Activated B cell treated with CpG ODN at 0.5 μM for 24 hours (primary cell): ENCODE measurements at regions of chr16 and their contacts with region 1.

Region 1: DNA sequence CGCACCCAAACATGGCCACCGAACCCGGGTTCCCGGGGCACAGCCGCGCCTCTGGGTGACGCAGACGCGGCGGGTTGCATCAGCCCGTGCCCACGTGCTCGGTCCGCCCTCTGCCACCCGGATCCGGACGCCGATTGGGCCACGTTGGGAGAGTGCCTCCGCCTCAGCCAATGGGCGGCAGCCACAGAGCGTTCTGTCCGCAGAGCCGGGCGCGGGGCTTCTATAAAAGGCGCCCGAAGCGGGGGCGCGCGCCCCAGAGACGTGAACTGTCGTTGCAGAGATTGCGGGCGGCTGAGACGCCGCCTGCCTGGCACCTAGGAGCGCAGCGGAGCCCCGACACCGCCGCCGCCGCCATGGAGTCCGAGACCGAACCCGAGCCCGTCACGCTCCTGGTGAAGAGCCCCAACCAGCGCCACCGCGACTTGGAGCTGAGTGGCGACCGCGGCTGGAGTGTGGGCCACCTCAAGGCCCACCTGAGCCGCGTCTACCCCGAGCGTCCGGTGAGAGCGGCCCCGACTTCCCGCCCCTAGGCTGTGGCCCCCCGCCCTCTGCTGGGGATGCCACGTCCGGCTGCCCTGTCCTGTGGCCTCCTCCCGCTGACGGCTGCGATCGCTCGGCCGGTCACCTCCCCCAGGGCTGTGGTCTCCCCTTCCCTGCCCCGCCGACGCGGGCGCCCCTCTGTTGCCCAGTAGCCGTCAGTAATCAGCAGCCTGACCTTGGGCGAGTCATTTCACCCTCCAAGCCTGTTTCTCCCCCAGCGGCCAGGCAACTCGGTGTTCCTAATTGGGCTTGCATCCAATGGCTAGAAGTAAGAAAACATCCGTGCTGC is at the start of gene HERPUD1:
- DNase-seq: peak; percentile 98
- ATAC-seq: peak; percentile 79
- H3K4me3 Mint-ChIP-seq: peak within 1 kb of the TSS; percentile 97
- H3K27ac Mint-ChIP-seq: peak within 1 kb of the TSS; percentile 95
- H3K4me1 Mint-ChIP-seq: peaks cover 61% of the 10 kb centered on the region
- H3K27me3 Mint-ChIP-seq: no peaks in the 10 kb centered on the region
- CTCF ChIP-seq: no peak
- total RNA-seq, gene HERPUD1: 766 and 820 TPM in 2 replicates

Region 2: GRCh38 chr16:56729735-56730662 is 202.1 kb before region 1 on chr16 and contains the start of gene NUP93:
- CTCF ChIA-PET with region 1: no interaction called
- POLR2A ChIA-PET with region 1: interaction called, 4 read pairs
- intact Hi-C with region 1: loop called (anchors 2 kb)
- DNase-seq: peak; percentile 79
- ATAC-seq: peak; percentile 89
- H3K4me3 Mint-ChIP-seq: peak within 1 kb of the TSS; percentile 90
- H3K27ac Mint-ChIP-seq: peak within 1 kb of the TSS; percentile 84
- H3K4me1 Mint-ChIP-seq: peaks cover 20% of the 10 kb centered on the region
- H3K27me3 Mint-ChIP-seq: no peaks in the 10 kb centered on the region
- CTCF ChIP-seq: no peak
- total RNA-seq, gene NUP93: 104 and 111 TPM in 2 replicates

Region 3: DNA sequence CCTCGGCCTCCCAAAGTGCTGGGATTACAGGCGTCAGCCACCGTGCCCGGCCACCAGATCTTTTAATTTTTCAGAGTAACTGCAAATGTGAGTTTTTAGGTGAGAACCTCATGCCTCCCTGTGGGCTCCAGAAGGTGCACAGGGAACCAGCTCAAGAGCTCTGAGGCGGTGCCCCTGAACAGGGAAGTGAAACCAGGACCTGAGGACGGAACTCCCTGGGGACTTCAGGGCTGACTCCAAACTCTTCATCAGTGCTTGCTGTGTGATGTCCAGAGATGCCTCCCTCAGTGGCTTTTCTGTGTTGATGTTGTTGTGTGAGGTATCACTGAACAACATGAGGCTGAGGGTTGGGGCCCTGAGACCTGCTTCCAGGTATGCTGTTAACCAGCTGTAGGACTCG is 43.3 kb before region 1 on chr16:
- CTCF ChIA-PET with region 1: no interaction called
- POLR2A ChIA-PET with region 1: interaction called, 25 read pairs
- intact Hi-C with region 1: loop called (anchors 1 kb)
- DNase-seq: peak; percentile 55
- ATAC-seq: peak; percentile 91
- H3K4me3 Mint-ChIP-seq: peak overlapping the region; percentile 24
- H3K27ac Mint-ChIP-seq: peak overlapping the region; percentile 68
- H3K4me1 Mint-ChIP-seq: peaks cover 16% of the 10 kb centered on the region
- H3K27me3 Mint-ChIP-seq: no peaks in the 10 kb centered on the region
- CTCF ChIP-seq: no peak

Region 4: GRCh38 chr16:56919099-56919800 is 12.9 kb before region 1 on chr16:
- CTCF ChIA-PET with region 1: interaction called, 13 read pairs
- POLR2A ChIA-PET with region 1: interaction called, 795 read pairs
- intact Hi-C with region 1: loop called (anchors 1 kb)
- DNase-seq: no peak
- ATAC-seq: peak; percentile 16
- H3K4me3 Mint-ChIP-seq: peak overlapping the region; percentile 61
- H3K27ac Mint-ChIP-seq: peak overlapping the region; percentile 96
- H3K4me1 Mint-ChIP-seq: peaks cover 77% of the 10 kb centered on the region
- H3K27me3 Mint-ChIP-seq: no peaks in the 10 kb centered on the region
- CTCF ChIP-seq: no peak

Region 5: DNA sequence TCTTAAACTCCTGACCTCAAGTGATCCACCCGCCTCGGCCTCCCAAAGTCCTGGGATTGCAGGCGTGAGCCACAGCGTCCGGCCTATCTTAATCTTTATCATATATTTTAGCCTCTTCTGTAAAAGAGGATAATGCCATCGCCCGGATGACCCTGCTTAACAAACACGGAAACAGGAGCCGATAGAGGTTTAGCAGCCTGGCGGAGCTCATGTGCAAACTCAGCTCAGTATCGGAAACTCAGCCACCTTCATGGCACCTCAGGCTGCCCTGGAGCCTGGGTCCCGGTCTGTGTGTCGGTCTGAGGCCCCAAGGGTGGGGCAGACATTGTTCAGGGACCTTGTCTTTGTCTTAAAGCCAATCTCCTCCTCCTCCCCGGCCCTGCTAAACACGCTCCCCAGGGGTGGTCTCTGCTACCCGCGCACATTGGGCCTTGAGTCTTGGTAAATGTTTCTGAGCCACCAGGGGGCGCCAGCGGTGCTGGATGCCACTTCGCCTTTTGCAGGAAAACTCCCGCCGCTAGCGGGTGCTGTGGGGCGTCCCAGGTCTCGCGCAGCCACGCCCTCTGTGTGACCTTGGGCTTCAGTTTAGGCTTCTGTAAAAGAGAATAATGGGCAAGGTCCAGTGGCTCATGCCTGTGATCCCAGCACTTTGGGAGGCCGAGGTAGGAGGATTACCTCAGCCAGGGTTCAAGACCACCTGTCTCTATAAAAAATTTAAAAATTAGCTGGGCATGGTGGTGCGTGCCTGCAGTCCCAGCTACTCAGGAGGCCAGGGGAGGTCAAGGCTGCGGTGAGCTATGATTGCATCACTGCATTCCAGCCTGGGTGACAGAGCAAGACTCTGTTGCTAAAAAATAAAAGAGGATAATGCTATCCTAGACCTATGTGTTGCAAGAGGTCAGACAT is 32.4 kb after region 1 on chr16:
- CTCF ChIA-PET with region 1: interaction called, 5 read pairs
- POLR2A ChIA-PET with region 1: interaction called, 11 read pairs
- intact Hi-C with region 1: no loop called
- DNase-seq: peak; percentile 93
- ATAC-seq: peak; percentile 94
- H3K4me3 Mint-ChIP-seq: no peak overlapping the region
- H3K27ac Mint-ChIP-seq: peak overlapping the region; percentile 84
- H3K4me1 Mint-ChIP-seq: peaks cover 25% of the 10 kb centered on the region
- H3K27me3 Mint-ChIP-seq: no peaks in the 10 kb centered on the region
- CTCF ChIP-seq: peak; percentile 97